Mammary epithelial cell (primary cell): ENCODE measurements at regions of chr1 and their contacts with region 1.

Region 1: GRCh38 chr1:112715264-112716053 is at the start of gene PPM1J:
- DNase-seq: peak; percentile 96
- H3K4me3 ChIP-seq: peak within 1 kb of the TSS; percentile 71 to 73 (median 72)
- H3K27ac ChIP-seq: peak within 1 kb of the TSS; percentile 76
- H3K4me1 ChIP-seq: peaks cover 22% of the 10 kb centered on the region
- H3K27me3 ChIP-seq: no peaks in the 10 kb centered on the region
- CTCF ChIP-seq: no peak
- total RNA-seq, gene PPM1J: 6.2 to 9.4 TPM

Region 2: DNA sequence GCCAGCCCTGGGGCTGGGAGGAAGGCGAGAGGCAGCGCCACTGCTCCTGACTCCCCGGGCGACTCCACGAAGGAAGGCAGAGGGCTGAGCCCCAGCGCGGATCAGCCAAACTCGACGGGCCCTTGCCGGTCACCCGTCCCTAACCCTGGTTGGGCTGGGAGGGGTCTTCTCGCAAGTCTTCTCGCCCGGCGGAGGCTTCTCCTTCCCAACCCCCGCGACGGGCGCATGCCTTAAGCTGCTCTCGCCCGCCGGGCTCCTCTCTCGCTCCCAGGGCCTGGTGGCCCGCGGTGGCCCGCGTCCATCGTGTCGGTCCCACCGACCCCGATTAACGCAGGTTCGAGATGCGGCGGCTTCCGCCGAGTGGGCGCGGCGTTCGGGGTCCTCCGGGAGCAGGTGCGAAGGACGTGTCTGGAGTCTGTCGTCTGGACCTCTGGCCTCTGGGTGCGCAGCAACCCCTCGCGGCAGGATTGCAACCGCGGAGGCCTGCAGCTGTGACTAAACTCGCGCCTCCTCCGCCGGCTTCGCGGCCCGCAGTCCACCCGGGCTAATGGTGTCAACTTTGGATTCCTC is 28.6 kb after region 1 on chr1:
- CTCF ChIA-PET with region 1: no interaction called
- dilution Hi-C with region 1: no loop called
- in situ Hi-C with region 1: no loop called
- intact Hi-C with region 1: loop called (anchors 1 kb)
- DNase-seq: no peak
- H3K4me3 ChIP-seq: peak overlapping the region in 2 of 3 experiments; percentile 8 to 26
- H3K27ac ChIP-seq: no peak overlapping the region
- H3K4me1 ChIP-seq: peaks cover 10% of the 10 kb centered on the region
- H3K27me3 ChIP-seq: no peaks in the 10 kb centered on the region
- CTCF ChIP-seq: peak; percentile 13 to 68

Region 3: GRCh38 chr1:112809253-112809684 is 93.8 kb after region 1 on chr1:
- CTCF ChIA-PET with region 1: interaction called, 4 read pairs
- dilution Hi-C with region 1: no loop called
- in situ Hi-C with region 1: loop called (anchors 5 kb)
- intact Hi-C with region 1: loop called (anchors 1 kb)
- DNase-seq: peak; percentile 62
- H3K4me3 ChIP-seq: no peak overlapping the region
- H3K27ac ChIP-seq: no peak overlapping the region
- H3K4me1 ChIP-seq: peaks cover 9% of the 10 kb centered on the region
- H3K27me3 ChIP-seq: no peaks in the 10 kb centered on the region
- CTCF ChIP-seq: peak; percentile 95 to 96

Region 4: DNA sequence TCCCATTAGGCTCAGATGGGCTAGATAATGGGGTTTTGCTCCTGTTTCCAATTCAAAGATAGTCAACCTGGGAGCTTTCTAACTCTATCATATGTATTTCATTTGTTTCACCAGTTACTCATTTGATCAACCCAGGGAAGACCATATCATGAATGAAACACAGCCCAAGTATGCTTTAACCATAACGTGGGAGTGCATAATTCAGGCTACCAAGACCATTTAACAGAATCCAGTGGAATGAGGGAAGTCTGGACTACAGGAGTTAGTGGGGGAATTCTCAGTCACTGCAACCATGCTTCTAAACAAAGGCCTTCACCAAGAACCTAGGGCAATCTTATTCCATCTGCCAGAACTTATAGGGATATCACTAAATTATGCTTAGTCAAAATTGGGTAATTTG is 255.5 kb after region 1 on chr1:
- CTCF ChIA-PET with region 1: no interaction called
- dilution Hi-C with region 1: loop called (anchors 5 kb)
- in situ Hi-C with region 1: no loop called
- intact Hi-C with region 1: no loop called
- DNase-seq: no peak
- H3K4me3 ChIP-seq: no peak overlapping the region
- H3K27ac ChIP-seq: no peak overlapping the region
- H3K4me1 ChIP-seq: no peaks in the 10 kb centered on the region
- H3K27me3 ChIP-seq: no peaks in the 10 kb centered on the region
- CTCF ChIP-seq: no peak

Region 5: GRCh38 chr1:113109908-113110554 is 394.6 kb after region 1 on chr1:
- CTCF ChIA-PET with region 1: no interaction called
- dilution Hi-C with region 1: no loop called
- in situ Hi-C with region 1: no loop called
- intact Hi-C with region 1: loop called (anchors 10 kb)
- DNase-seq: peak; percentile 35
- H3K4me3 ChIP-seq: no peak overlapping the region
- H3K27ac ChIP-seq: no peak overlapping the region
- H3K4me1 ChIP-seq: no peaks in the 10 kb centered on the region
- H3K27me3 ChIP-seq: no peaks in the 10 kb centered on the region
- CTCF ChIP-seq: peak in 1 of 2 donors; percentile 6